CD8-positive, alpha-beta memory T cell (primary cell): ENCODE measurements at regions of chr19 and their contacts with region 1.

Region 1: GRCh38 chr19:3434712-3435553 is 45.4 kb downstream of the SMIM24 start:
- DNase-seq: peak; percentile 90 to 97 (median 94)
- H3K4me3 ChIP-seq: peak overlapping the region; percentile 92
- H3K4me3 Mint-ChIP-seq: peak overlapping the region; percentile 87 to 99 (median 98)
- H3K27ac ChIP-seq: peak overlapping the region; percentile 87
- H3K27ac Mint-ChIP-seq: peak overlapping the region; percentile 90 to 100 (median 99)
- H3K4me1 ChIP-seq: peaks cover 12% of the 10 kb centered on the region
- H3K4me1 Mint-ChIP-seq: peaks cover 14 to 18% (median 16%) of the 10 kb centered on the region in 3 donors
- H3K27me3 ChIP-seq: no peaks in the 10 kb centered on the region
- H3K27me3 Mint-ChIP-seq: no peaks in the 10 kb centered on the region

Region 2: GRCh38 chr19:3324321-3324856 is 110.5 kb before region 1 on chr19:
- CTCF ChIA-PET with region 1: interaction called, 88 read pairs
- POLR2A ChIA-PET with region 1: no interaction called
- DNase-seq: peak; percentile 40 to 79 (median 63)
- H3K4me3 ChIP-seq: no peak overlapping the region
- H3K4me3 Mint-ChIP-seq: no peak overlapping the region
- H3K27ac ChIP-seq: no peak overlapping the region
- H3K27ac Mint-ChIP-seq: no peak overlapping the region
- H3K4me1 ChIP-seq: no peaks in the 10 kb centered on the region
- H3K4me1 Mint-ChIP-seq: peaks cover 0 to 4% (median 1%) of the 10 kb centered on the region in 3 donors
- H3K27me3 ChIP-seq: no peaks in the 10 kb centered on the region
- H3K27me3 Mint-ChIP-seq: peaks cover 7 to 24% of the 10 kb centered on the region in 2 donors

Region 3: GRCh38 chr19:3471954-3472655 is 37.2 kb after region 1 on chr19:
- CTCF ChIA-PET with region 1: no interaction called
- POLR2A ChIA-PET with region 1: no interaction called
- DNase-seq: peak in 3 of 5 donors; percentile 23 to 26 (median 25)
- H3K4me3 ChIP-seq: no peak overlapping the region
- H3K4me3 Mint-ChIP-seq: peak overlapping the region in 1 of 7 donors; percentile 48
- H3K27ac ChIP-seq: no peak overlapping the region
- H3K27ac Mint-ChIP-seq: no peak overlapping the region
- H3K4me1 ChIP-seq: no peaks in the 10 kb centered on the region
- H3K4me1 Mint-ChIP-seq: no peaks in the 10 kb centered on the region
- H3K27me3 ChIP-seq: no peaks in the 10 kb centered on the region
- H3K27me3 Mint-ChIP-seq: peaks cover 0 to 1% of the 10 kb centered on the region in 2 donors

Region 4: DNA sequence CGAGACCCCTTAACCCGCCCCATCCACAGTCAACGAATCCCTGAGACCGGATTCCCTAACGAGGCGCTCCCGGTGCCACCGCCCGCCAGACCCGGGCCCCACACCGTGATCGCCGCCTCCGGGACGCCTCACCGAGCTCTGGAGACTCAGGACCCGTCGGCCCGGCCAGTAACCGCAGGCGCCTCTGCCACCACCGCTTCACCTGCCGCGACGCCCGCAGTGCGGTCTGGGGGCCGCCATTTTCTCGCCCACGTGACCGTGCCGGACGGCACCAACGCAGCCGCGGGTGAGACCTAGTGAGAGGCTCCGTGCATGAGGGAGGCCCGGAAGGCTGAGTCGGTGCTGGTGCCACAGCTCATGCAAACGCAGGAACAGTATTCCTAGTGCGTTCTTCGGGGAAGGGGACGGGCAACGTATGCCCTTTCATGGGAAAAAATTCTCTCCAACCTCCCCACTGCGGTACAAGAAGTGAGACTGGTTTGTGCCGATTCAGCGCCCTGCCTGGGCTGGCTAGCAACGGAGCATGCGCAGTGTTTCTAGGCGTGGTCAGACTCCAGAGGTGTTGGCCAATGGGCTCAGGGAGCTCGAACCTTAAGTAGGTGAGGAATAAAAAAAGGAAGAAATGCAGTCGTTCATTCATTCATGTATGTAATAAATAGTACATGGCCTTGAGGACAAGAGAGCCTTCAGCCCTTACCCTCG is 65.6 kb after region 1 on chr19 and contains the start of gene DOHH:
- CTCF ChIA-PET with region 1: no interaction called
- POLR2A ChIA-PET with region 1: no interaction called
- DNase-seq: peak; percentile 89 to 96 (median 93)
- H3K4me3 ChIP-seq: peak within 1 kb of the TSS; percentile 76
- H3K4me3 Mint-ChIP-seq: peak within 1 kb of the TSS; percentile 89 to 96 (median 94)
- H3K27ac ChIP-seq: peak within 1 kb of the TSS; percentile 96
- H3K27ac Mint-ChIP-seq: peak within 1 kb of the TSS; percentile 94 to 99 (median 98)
- H3K4me1 ChIP-seq: peaks cover 24% of the 10 kb centered on the region
- H3K4me1 Mint-ChIP-seq: peaks cover 29 to 42% (median 32%) of the 10 kb centered on the region in 3 donors
- H3K27me3 ChIP-seq: no peaks in the 10 kb centered on the region
- H3K27me3 Mint-ChIP-seq: peaks cover 0 to 7% of the 10 kb centered on the region in 2 donors
- total RNA-seq, gene DOHH: 21.3 to 21.4 TPM